ENCODE measurements at regions of chr11 and their contacts with region 1.

Region 1: GRCh38 chr11:66987158-66987620 is 12.1 kb downstream of the C11orf86 start:
- DNase-seq: no peak
- ATAC-seq: no peak

Region 2: DNA sequence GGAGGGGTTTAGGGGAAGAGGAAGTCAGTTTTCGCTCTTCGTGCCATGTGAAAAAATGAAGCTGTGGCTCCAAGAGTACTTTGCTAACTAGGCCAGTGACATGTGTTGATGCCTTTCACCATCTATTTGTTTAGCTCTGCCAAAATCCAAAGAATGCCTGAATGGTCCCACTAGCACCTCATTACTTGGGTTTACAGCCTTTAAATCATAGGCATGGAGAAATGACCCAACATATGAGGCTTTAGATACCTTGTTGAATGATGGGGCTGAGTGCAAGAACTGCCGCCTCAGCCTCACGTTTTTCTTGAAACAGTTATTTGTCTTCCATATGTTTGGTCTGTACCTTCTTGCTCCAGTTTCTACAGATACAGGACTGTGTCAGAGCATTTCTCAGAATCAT is 340.4 kb before region 1 on chr11:
- intact Hi-C with region 1: loop called (anchors 5 kb)
- DNase-seq: no peak
- ATAC-seq: no peak

Region 3: GRCh38 chr11:67353317-67354074 is 366.3 kb after region 1 on chr11 and contains the start of gene POLD4:
- intact Hi-C with region 1: no loop called
- DNase-seq: peak; percentile 99
- ATAC-seq: peak; percentile 96
- total RNA-seq, gene POLD4: 43.5 TPM

Region 4: GRCh38 chr11:67691149-67691548 is 704.0 kb after region 1 on chr11:
- intact Hi-C with region 1: no loop called
- DNase-seq: no peak
- ATAC-seq: no peak